MCF 10A (cell line): ENCODE measurements at regions of chr1 and their contacts with region 1.

Region 1: GRCh38 chr1:203663294-203663693 is 36.7 kb downstream of the ATP2B4 start:
- DNase-seq: peak; percentile 98
- H3K4me3 Mint-ChIP-seq: peak overlapping the region; percentile 3
- H3K27ac Mint-ChIP-seq: peak overlapping the region; percentile 58
- H3K4me1 Mint-ChIP-seq: peaks cover 34% of the 10 kb centered on the region
- H3K27me3 Mint-ChIP-seq: no peaks in the 10 kb centered on the region
- CTCF ChIP-seq: no peak

Region 2: GRCh38 chr1:203673550-203674427 is 10.5 kb after region 1 on chr1:
- CTCF ChIA-PET with region 1: interaction called, 4 read pairs
- POLR2A ChIA-PET with region 1: interaction called, 8 read pairs
- intact Hi-C with region 1: loop called (anchors 1 kb)
- DNase-seq: peak; percentile 99
- H3K4me3 Mint-ChIP-seq: peak overlapping the region; percentile 1
- H3K27ac Mint-ChIP-seq: peak overlapping the region; percentile 6
- H3K4me1 Mint-ChIP-seq: peaks cover 36% of the 10 kb centered on the region
- H3K27me3 Mint-ChIP-seq: no peaks in the 10 kb centered on the region
- CTCF ChIP-seq: peak; percentile 39

Region 3: GRCh38 chr1:203996126-203996525 is 332.8 kb after region 1 on chr1:
- CTCF ChIA-PET with region 1: no interaction called
- POLR2A ChIA-PET with region 1: no interaction called
- intact Hi-C with region 1: no loop called
- DNase-seq: peak; percentile 19
- H3K4me3 Mint-ChIP-seq: no peak overlapping the region
- H3K27ac Mint-ChIP-seq: no peak overlapping the region
- H3K4me1 Mint-ChIP-seq: peaks cover 4% of the 10 kb centered on the region
- H3K27me3 Mint-ChIP-seq: no peaks in the 10 kb centered on the region
- CTCF ChIP-seq: no peak

Region 4: DNA sequence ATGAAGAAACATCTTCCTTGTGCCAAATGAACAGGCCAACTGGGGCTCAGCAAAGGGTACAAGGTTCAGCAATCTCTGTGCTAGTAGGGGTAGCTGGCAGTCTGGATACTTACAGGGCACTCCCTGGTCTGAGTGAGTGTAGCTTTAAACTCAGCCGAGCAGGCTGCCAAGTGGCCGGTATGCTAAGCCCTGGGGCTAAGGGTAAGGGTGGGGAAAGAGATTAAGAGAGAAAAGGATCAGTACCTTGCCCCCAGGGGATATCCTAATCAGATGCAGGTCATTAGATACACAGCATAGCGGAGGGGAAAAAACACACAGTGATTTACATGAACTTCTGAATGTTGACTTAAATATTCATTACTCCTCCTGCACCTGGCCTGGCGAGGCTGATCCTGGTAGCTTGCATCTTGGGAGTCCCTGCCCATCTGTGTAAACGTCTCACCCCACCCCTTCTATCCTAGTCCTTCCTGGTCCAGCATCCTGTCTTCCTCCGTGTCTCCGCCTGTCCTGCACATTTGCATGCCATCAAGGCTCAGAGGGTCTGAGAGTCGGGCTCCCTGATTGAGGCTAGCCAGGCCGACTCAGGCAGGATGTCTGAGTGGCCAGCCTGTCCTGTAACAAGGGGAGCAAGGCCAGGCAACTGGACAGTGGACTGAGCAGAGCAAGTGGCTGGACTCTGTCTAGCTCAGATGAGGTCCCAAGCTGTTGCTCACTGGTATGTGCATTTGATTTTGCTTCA is 1340.3 kb after region 1 on chr1:
- CTCF ChIA-PET with region 1: no interaction called
- POLR2A ChIA-PET with region 1: no interaction called
- intact Hi-C with region 1: no loop called
- DNase-seq: no peak
- H3K4me3 Mint-ChIP-seq: no peak overlapping the region
- H3K27ac Mint-ChIP-seq: no peak overlapping the region
- H3K4me1 Mint-ChIP-seq: no peaks in the 10 kb centered on the region
- H3K27me3 Mint-ChIP-seq: peaks cover 66% of the 10 kb centered on the region
- CTCF ChIP-seq: no peak